Head of caudate nucleus (tissue), 42 donors: ENCODE measurements at regions of chrX and their contacts with region 1.

Region 1: DNA sequence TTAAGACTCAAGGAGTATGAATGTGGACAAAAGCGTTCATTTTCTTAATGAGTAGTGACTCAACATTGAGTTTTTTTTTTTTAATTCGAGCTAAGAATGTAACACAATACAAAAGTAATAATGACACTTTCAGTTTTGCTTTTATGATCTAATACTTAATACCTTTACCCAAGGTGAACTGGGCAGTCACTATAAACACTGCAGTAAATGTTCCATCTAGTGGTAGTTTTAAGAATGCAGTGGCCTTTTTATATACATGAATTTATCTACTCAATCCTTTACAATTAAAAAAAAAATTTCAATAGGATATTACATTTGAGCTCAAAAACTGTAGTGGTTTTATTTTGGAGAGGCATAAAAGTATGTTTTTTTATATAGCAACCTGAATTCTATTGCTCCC is 33.9 kb downstream of the PDK3 start:
- DNase-seq: no peak

Region 2: DNA sequence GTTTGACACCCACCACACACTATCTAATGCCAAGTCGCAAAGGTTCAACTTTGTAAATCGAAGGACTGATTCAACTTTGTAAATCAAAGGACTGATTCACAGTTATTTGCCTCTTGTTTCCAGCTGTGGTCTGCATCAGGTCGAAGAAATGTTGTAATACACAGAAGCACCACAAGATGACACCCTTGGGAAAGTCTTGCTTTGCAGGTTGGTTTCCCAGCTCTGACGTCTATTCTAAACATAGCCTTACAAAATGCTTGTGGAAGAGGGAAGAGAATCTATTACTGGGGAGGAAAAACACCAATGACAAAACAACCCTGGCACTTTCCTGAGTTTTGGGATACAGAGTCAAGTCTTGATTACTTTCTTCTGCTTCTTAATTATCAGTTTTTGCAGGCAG is 103.2 kb before region 1 on chrX:
- intact Hi-C with region 1: loop called (anchors 10 kb)
- DNase-seq: peak in 29 of 42 donors; percentile 4 to 78 (median 40)

Region 3: GRCh38 chrX:25285598-25285997 is 786.6 kb after region 1 on chrX:
- intact Hi-C with region 1: no loop called
- DNase-seq: no peak